ENCODE measurements at regions of chr1 and their contacts with region 1.

Region 1: GRCh38 chr1:205977402-205978014 is 25.7 kb downstream of the RAB7B start:
- DNase-seq: peak; percentile 66
- H3K4me3 ChIP-seq: no peak overlapping the region
- CTCF ChIP-seq: peak; percentile 94

Region 2: DNA sequence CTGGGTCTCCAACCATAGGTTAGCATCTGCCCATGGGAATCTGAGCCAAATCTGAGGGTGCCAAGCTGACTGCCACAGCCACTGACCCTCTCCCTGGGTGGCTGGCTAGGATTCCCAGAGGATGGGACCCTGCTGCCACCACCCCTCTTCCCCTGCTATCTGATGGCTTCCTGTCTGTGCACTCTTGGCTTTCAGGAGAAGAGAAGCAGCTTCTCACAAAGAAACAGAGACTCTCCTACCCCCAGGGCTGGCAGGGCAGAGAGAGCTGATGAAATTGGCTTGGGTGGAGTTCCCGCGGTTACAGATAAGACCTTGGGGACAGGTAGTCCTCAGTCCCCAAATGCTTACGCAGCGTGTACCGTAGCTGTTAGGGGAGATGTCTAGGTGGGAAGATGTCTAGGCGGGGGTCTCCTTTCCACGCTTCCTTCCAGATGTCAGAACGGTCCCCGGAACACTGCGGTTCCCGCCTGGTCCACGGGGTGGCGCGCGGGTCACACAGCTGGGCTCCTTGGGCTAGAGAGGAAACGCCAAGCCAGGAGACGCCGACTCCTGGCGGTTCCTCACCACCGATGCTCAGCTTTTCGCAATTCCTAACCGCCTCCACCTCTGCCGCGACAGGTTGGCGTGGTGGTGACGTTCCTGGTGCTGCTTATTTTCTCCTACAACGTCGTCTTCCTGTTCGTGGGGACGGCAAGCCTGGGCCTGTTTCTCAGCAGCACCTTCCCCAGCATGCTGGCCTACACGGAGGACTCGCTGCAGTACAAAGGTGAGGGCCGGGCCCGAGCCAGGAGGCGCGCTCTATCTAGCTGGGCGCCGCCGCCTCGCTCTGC is 385.8 kb before region 1 on chr1:
- CTCF ChIA-PET with region 1: interaction called, 20 read pairs
- POLR2A ChIA-PET with region 1: no interaction called
- DNase-seq: no peak
- H3K4me3 ChIP-seq: peak overlapping the region; percentile 52
- CTCF ChIP-seq: peak; percentile 100

Region 3: DNA sequence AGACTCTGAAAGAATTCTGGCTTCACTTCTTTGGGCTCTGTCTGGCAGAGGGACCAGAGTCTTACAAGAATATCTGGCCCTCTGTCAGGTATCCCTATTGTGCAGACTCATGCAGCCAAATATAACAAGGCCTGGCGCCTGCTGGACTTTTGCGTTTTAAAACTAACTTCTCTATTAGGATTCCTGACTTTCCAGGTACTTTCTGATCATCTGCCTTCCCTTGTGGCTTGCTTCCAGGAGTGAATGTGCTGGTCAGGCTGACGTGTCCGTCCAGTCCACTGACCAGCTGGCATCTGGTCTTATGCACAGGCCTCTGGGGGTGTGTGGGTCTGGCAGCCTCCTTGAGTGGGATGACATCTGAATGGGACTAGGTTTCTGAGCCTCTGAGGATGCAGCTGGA is 193.6 kb before region 1 on chr1:
- CTCF ChIA-PET with region 1: interaction called, 417 read pairs
- POLR2A ChIA-PET with region 1: no interaction called
- DNase-seq: no peak
- H3K4me3 ChIP-seq: no peak overlapping the region
- CTCF ChIP-seq: no peak

Region 4: GRCh38 chr1:205812878-205813754 is 164.4 kb before region 1 on chr1 and contains the start of gene SLC41A1:
- CTCF ChIA-PET with region 1: interaction called, 25 read pairs
- POLR2A ChIA-PET with region 1: interaction called, 4 read pairs
- DNase-seq: peak; percentile 52
- H3K4me3 ChIP-seq: peak within 1 kb of the TSS; percentile 80
- CTCF ChIP-seq: no peak

Region 5: GRCh38 chr1:205919026-205919746 is 58.3 kb before region 1 on chr1:
- CTCF ChIA-PET with region 1: interaction called, 992 read pairs
- POLR2A ChIA-PET with region 1: interaction called, 10 read pairs
- DNase-seq: peak; percentile 63
- H3K4me3 ChIP-seq: no peak overlapping the region
- CTCF ChIP-seq: peak; percentile 89

Region 6: GRCh38 chr1:205950280-205950679 is 27.2 kb before region 1 on chr1:
- CTCF ChIA-PET with region 1: interaction called, 44 read pairs
- POLR2A ChIA-PET with region 1: no interaction called
- DNase-seq: no peak
- H3K4me3 ChIP-seq: no peak overlapping the region
- CTCF ChIP-seq: no peak

Region 7: GRCh38 chr1:206012086-206012859 is 34.8 kb after region 1 on chr1:
- CTCF ChIA-PET with region 1: no interaction called
- POLR2A ChIA-PET with region 1: no interaction called
- DNase-seq: no peak
- H3K4me3 ChIP-seq: no peak overlapping the region
- CTCF ChIP-seq: no peak

Region 8: DNA sequence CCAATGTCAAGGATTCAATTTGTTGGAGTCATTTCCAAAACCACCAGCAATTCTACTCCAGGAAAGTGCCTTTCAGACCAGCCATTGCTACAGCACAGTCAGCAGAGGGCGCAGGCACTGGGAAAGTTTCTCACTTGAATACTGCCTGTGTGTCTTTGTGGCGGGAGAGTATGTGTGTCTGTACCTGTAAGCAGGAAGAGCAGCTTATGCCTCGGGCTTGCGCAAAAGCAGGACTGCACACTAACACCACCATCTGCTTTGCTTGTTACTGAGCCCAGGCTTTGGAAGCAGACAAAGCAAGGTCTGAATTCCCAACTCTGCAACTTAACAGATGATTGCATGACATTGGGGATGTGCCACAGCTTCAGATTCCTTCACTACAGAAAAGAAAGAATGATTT is 53.2 kb after region 1 on chr1:
- CTCF ChIA-PET with region 1: interaction called, 14 read pairs
- POLR2A ChIA-PET with region 1: no interaction called
- DNase-seq: no peak
- H3K4me3 ChIP-seq: no peak overlapping the region
- CTCF ChIP-seq: peak; percentile 91

Measured in AG04449 (cell line).